HEK293T (cell line): ENCODE measurements at regions of chr5 and their contacts with region 1.

Region 1: DNA sequence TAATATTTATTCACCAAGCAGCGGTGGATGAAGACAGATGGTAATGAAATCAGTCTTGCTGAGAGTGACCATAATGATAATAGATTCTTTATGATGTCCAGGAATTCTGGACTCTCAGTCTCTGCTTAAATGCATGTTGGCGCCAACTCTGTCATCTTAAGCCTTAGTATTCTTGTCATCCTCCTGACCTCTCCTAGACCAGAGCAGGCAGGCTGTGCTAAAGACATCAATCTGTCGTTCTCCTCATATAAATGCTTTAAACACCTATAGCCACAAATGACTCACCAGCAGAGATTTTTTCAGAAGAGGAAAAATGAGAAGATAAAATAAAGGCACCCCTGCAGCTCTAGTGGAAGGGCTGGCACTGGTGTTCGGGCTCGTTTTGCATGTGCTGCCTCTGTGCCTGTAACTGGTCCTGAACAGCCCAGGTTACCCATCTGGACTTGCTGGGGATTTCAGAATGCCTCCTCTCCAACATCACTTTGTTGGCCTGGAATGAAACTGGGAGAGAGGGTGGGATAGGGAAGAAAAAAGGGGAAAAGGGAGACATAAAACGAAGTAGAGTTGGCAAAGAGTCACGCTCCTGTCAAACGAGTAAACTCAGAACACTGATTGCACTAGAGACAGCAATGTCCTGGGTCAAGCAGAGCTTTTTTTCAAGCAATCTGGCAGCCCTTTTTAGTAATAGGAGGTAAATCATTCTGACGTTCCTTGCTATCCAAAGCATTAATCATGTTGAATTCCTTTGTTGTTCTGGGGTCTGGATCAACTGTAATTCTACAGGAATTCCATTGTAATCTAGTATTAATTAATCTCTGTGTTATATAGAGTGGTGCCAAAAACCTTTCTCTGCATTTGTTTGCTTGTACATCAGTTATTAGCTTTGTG is 195.5 kb upstream of the CLINT1 start:
- DNase-seq: peak; percentile 47

Region 2: GRCh38 chr5:157978061-157978460 is 76.4 kb before region 1 on chr5:
- CTCF ChIA-PET with region 1: no interaction called
- POLR2A ChIA-PET with region 1: no interaction called
- DNase-seq: no peak

Region 3: GRCh38 chr5:159899067-159900049 is 1844.9 kb after region 1 on chr5:
- CTCF ChIA-PET with region 1: interaction called, 12 read pairs
- POLR2A ChIA-PET with region 1: no interaction called
- DNase-seq: no peak